IMR-90 (cell line): ENCODE measurements at regions of chr6 and their contacts with region 1.

Region 1: GRCh38 chr6:85537055-85537494 is 56.6 kb downstream of the SNX14 start:
- DNase-seq: peak; percentile 24
- ATAC-seq: peak; percentile 56; the same call in 1 of the 2 replicates
- H3K4me3 ChIP-seq: no peak overlapping the region
- H3K27ac ChIP-seq: no peak overlapping the region
- H3K4me1 ChIP-seq: no peaks in the 10 kb centered on the region
- H3K27me3 ChIP-seq: no peaks in the 10 kb centered on the region
- CTCF ChIP-seq: peak; percentile 46
- POLR2A ChIP-seq: no peak
- RAD21 ChIP-seq: peak; percentile 24; the same call in 1 of the 2 replicates

Region 2: DNA sequence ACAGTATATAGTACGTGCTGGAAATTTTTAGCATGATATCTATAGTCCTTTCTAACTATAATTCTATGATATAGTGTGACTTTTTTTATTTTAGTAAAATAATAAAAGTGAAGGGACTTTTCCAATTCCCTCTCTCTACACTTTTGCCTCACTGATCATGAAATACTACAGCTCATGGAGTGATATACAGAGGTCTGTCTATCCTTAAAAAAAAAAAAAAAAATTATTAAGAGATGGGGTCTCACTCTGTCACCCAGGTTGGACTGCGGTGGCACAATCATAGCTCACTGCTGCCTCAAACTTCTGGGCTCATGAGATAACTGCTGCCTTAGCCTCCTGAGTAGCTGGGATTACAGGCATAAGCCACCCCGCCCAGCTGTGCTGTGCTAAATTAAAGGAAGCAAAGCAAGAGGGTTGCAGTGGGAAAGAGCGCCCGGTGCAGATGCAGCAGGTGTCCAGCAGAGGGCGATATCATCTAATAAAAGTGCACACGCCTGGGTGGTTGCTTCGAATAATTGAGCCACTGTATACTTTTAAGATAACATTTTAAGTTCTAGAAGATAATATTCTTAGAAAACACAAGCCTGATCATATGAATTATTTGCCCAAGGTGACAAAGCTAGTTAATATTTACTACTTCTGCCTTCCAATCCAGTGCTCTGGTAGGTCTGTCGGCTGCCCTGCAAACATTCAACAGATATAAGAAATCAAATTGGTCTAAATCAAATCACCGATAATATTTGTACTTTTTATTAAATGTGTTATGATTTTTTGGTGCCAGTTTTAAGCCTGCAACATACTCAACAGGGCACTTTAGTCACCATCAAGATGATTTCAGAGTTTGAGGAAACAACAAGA is 182.1 kb before region 1 on chr6:
- CTCF ChIA-PET with region 1: no interaction called
- POLR2A ChIA-PET with region 1: no interaction called
- dilution Hi-C with region 1: no loop called
- in situ Hi-C with region 1: no loop called
- intact Hi-C with region 1: loop called (anchors 1 kb)
- DNase-seq: peak; percentile 72
- ATAC-seq: peak; percentile 99
- H3K4me3 ChIP-seq: no peak overlapping the region
- H3K27ac ChIP-seq: no peak overlapping the region
- H3K4me1 ChIP-seq: peaks cover 2% of the 10 kb centered on the region
- H3K27me3 ChIP-seq: no peaks in the 10 kb centered on the region
- CTCF ChIP-seq: peak; percentile 97
- POLR2A ChIP-seq: 0 out of 2 replicates have a peak, but pooled peaks have one; percentile 28
- RAD21 ChIP-seq: peak; percentile 97

Region 3: DNA sequence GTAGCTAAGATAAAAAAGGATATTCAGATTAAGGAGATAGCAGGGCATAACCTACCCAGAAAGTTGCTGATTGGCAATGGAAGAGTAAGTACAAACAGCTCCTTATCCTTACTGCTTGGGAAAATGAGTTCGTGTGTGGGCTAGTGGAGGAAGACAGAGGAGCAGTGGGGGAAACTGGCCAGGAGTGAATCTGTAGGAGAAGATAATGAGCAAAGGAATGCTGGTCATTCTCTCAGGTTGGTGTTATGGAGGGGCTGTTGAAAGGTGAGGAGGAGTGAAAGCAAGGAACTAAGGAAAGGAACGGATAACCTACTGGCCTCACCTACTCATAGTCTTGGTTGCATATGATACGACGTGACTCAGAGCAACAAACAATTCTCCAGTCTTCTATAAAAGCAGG is 1799.3 kb after region 1 on chr6:
- CTCF ChIA-PET with region 1: interaction called, 11 read pairs
- POLR2A ChIA-PET with region 1: no interaction called
- dilution Hi-C with region 1: no loop called
- in situ Hi-C with region 1: no loop called
- intact Hi-C with region 1: no loop called
- DNase-seq: no peak
- ATAC-seq: no peak
- H3K4me3 ChIP-seq: no peak overlapping the region
- H3K27ac ChIP-seq: no peak overlapping the region
- H3K4me1 ChIP-seq: peaks cover 6% of the 10 kb centered on the region; the same call in 1 of the 2 replicates
- H3K27me3 ChIP-seq: no peaks in the 10 kb centered on the region
- CTCF ChIP-seq: no peak
- POLR2A ChIP-seq: no peak
- RAD21 ChIP-seq: no peak